BJ (cell line): ENCODE measurements at regions of chr5 and their contacts with region 1.

Region 1: GRCh38 chr5:171484460-171484899 is 65.0 kb downstream of the FGF18 start:
- DNase-seq: no peak
- H3K4me3 ChIP-seq: no peak overlapping the region
- H3K27me3 ChIP-seq: peaks cover 8% of the 10 kb centered on the region
- CTCF ChIP-seq: peak; percentile 78

Region 2: DNA sequence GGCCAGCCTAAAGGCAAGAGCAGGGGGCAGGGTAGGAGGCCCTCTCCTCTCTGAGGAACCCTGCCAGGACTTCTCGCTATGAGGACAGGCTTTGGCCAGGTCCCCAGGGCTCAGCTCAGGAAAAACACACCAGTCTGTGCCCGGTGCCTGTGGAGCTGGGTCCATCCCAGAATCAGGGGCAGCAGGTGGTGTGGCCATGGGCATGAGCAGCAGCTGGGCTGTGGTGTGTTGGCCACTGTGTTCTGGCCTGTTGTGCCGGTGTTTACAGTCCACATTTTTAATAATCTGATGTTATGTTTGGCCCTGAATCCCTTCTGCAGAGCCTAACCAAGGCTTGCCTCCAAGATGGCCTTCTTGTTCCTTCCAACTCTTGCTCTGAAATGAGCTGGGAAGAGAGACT is 12.0 kb after region 1 on chr5:
- CTCF ChIA-PET with region 1: interaction called, 11 read pairs
- POLR2A ChIA-PET with region 1: no interaction called
- DNase-seq: no peak
- H3K4me3 ChIP-seq: no peak overlapping the region
- H3K27me3 ChIP-seq: no peaks in the 10 kb centered on the region
- CTCF ChIP-seq: no peak